Activated B cell treated with CpG ODN at 0.5 μM for 24 hours (primary cell): ENCODE measurements at regions of chr1 and their contacts with region 1.

Region 1: DNA sequence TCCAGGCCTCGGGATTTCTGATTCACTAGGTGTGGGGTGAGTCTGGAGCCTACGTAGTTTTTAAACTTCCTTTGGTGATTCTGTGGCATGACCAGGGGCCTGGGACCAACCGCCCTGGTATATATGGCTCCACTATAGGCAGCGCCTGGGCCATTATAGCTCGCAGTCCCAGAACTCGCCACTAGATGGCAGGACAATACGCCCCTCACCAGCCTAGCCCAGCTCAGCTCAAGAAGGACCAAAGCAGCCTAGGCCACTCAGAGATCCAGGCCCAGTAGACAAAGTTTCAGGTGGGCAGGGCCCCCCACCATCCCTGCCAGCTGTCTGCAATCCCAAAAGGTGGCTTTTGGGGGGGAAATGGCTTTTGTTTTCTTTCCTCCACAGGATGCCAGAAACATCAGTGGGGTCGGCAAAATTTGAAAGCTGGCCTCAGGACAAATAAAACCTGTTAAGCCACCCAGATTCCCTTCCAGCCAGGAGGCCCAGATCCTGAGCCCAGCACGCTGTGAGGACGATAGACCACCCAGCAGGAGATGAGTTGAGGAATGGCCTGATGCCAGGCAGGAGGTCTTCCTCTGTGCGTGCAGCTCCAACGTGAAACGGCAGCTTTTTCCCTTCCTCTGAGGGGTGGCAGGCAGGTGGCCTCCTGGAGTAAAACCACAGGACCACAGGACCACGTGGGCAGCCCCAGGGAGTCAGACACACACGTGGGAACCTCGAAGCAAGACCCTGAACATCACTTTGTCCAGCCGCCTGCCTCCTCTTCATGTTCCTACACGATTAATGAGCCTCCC is 24.8 kb upstream of the TMEM51 start:
- DNase-seq: peak; percentile 52
- ATAC-seq: peak; percentile 80
- H3K4me3 Mint-ChIP-seq: no peak overlapping the region
- H3K27ac Mint-ChIP-seq: no peak overlapping the region
- H3K4me1 Mint-ChIP-seq: no peaks in the 10 kb centered on the region
- H3K27me3 Mint-ChIP-seq: peaks cover 9% of the 10 kb centered on the region
- CTCF ChIP-seq: peak; percentile 49

Region 2: GRCh38 chr1:15272009-15272788 is 143.5 kb after region 1 on chr1:
- CTCF ChIA-PET with region 1: interaction called, 11 read pairs
- POLR2A ChIA-PET with region 1: no interaction called
- intact Hi-C with region 1: loop called (anchors 1 kb)
- DNase-seq: no peak
- ATAC-seq: no peak
- H3K4me3 Mint-ChIP-seq: no peak overlapping the region
- H3K27ac Mint-ChIP-seq: no peak overlapping the region
- H3K4me1 Mint-ChIP-seq: no peaks in the 10 kb centered on the region
- H3K27me3 Mint-ChIP-seq: peaks cover 25% of the 10 kb centered on the region
- CTCF ChIP-seq: no peak

Region 3: DNA sequence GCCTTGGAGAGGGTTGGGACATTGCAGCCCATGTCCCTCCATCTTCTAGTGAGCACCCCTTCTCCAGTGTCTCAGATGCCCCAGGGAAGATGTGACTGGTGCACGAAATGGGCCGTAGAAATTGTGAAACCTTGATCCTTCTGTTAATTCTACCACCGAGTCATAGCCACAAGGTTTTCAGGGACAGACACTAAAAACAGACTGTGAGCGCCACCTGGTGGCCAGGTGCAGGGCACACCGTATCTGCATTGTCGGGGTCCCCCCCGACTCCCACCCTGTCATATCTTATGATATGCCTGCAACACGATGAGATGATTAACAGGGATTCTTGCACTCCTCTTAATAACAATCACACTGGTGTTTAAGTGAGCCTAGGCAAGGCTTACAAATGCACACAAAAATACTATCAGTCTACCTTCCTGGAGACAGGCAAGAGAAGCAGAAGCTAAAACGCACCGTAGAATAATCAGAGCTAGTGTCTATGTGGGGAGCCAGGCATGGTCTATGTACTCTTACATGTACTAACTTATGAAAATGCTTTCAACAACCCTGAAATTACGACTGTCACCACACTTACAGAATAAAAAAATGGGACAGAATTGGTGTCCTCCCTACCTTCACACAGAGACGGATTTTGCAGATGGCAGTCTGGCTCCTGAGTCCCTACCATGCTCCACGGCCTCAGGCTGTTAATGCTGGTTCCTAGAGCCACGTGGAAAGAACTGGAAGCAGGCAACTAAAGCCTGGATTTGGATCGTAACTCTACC is 176.2 kb after region 1 on chr1:
- CTCF ChIA-PET with region 1: interaction called, 23 read pairs
- POLR2A ChIA-PET with region 1: no interaction called
- intact Hi-C with region 1: no loop called
- DNase-seq: peak; percentile 48
- ATAC-seq: peak; percentile 37
- H3K4me3 Mint-ChIP-seq: no peak overlapping the region
- H3K27ac Mint-ChIP-seq: no peak overlapping the region
- H3K4me1 Mint-ChIP-seq: no peaks in the 10 kb centered on the region
- H3K27me3 Mint-ChIP-seq: peaks cover 7% of the 10 kb centered on the region
- CTCF ChIP-seq: peak; percentile 30

Region 4: DNA sequence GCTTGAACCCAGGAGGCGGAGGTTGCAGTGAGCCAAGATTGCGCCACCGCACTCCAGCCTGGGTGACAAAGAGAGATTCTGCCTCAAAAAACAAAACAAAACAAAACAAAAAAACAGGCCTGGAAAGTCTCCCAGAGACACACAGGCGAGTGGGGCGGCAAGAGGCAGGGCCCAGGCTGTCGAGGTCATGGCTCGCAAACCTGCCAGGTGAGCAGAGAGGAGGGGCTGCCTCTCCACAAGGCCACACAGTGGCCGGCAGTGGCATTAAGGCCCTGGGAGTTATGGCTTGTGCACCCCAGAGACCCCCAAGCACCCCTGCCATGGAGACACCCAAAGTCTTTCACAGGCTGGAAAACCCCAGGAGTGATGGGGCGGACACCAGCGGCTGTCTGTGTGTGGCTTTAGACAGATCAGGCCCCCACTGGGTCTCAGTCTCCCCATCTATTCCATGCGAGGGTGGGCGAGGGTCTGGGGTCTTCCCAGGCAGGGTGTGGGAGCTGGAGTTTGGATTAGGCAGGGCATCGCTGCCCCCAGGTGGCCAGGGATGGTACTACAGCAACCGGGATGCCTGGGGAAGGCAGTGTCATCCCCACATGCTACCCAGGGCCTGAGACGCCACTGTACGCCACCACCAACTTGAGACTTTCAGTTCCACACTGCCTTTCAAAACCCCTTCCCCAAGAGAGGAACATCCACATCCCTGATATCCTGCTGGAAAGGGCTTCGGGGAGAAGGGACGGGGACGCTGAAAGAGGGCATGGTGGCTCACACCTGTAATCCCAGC is 302.3 kb after region 1 on chr1:
- CTCF ChIA-PET with region 1: interaction called, 12 read pairs
- POLR2A ChIA-PET with region 1: no interaction called
- intact Hi-C with region 1: loop called (anchors 1 kb)
- DNase-seq: peak; percentile 78
- ATAC-seq: peak; percentile 81
- H3K4me3 Mint-ChIP-seq: no peak overlapping the region
- H3K27ac Mint-ChIP-seq: no peak overlapping the region
- H3K4me1 Mint-ChIP-seq: no peaks in the 10 kb centered on the region
- H3K27me3 Mint-ChIP-seq: no peaks in the 10 kb centered on the region
- CTCF ChIP-seq: peak; percentile 71

Region 5: DNA sequence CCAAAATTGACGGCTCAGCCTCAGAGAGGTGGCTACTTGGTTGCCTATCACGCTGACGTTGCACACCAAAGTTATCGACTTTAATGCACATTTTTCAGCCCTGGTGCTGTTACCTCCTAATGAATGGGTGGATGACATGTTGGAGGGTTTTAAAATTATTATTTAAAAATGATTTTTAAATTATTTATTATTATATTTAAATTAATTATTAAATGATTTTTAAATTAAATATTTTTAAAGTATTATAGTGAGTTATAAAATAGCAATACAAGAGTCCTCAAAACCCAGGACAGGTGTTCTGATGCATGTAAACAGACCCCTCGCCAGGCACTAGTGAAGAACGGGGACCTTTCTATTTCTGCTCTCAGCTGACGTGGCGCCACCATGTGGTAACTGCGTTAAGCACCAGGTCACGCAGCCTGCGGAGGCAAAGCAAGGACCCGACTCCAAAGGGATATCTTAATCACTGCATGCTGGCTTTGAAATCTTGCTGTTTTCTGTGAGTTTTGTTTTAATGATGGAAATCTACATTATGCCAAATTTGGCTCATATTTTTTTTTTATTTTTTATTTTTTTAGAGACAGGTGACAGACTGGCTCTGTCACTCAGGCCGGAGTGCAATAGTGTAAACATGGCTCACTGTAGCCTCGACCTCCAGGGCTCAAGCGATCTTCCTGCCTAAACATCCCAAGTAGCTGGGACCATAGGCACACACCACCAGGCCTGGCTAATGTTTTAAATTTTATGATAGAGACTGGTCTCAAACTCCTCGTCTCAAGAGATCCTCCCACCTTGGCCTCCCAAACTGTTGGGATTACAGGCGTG is 372.7 kb after region 1 on chr1:
- CTCF ChIA-PET with region 1: interaction called, 4 read pairs
- POLR2A ChIA-PET with region 1: no interaction called
- intact Hi-C with region 1: loop called (anchors 5 kb)
- DNase-seq: peak; percentile 33
- ATAC-seq: peak; percentile 52
- H3K4me3 Mint-ChIP-seq: no peak overlapping the region
- H3K27ac Mint-ChIP-seq: no peak overlapping the region
- H3K4me1 Mint-ChIP-seq: no peaks in the 10 kb centered on the region
- H3K27me3 Mint-ChIP-seq: no peaks in the 10 kb centered on the region
- CTCF ChIP-seq: no peak